ENCODE measurements at regions of chr4 and their contacts with region 1.

Region 1: GRCh38 chr4:55345980-55346850 is at the start of gene SRD5A3:
- DNase-seq: peak; percentile 94
- ATAC-seq: peak; percentile 98
- total RNA-seq, gene SRD5A3: 8.7 TPM

Region 2: DNA sequence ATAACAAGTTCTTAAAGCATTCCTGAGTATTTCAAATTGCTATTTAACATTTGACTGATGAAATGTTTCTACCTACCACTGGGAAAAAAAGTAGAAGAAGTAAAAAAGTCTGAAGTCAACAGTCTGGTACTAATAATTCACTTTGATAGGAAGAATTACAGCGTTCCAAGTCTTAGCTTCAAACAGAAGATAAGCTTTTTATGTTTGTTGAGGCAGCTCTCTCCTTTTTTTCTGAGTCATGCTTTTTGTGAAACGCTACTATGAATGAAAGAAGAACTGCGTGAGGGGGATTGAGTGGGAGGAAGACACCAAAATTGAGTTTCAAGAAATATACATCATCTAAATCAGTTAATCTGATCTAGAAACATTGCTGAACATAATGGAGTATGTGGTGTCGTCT is 207.8 kb before region 1 on chr4:
- intact Hi-C with region 1: no loop called
- DNase-seq: no peak
- ATAC-seq: no peak

Region 3: DNA sequence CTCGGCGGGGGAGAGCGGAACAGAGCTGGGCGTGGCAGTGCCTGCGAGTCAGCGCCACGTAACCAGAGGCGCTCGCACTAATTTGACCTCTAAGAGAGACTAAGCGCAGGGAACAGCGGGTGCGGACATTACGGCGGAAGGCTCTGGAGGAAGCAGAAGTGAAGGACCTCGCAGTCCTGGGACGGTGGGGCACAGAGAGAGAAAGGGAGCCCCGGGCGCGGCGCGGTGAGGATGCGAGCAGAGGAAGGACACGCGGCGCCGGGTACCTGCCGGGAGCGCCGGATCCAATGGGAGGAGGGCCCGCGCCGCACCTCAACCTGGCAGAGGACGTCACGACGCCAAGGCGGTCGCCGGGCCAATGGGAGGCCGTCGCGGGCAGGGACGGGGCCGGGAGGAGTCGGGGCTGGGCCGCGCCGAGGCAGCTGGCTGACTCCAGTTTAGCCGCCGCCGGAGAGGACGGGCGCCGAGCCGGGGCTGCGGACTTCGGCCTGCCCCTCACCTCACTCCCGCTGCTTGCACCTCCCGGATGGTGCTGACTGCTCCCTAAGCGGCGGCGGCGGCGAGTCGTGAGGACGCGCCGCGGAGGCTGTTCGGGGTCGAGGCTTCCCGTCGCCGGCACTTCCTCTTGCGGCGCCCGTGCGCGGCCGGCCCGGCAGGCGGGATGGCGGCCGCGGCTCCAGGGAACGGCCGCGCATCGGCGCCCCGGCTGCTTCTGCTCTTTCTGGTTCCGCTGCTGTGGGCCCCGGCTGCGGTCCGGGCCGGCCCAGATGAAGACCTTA is 49.5 kb after region 1 on chr4 and contains the start of gene TMEM165:
- intact Hi-C with region 1: loop called (anchors 10 kb)
- DNase-seq: peak; percentile 95
- ATAC-seq: peak; percentile 99
- total RNA-seq, gene TMEM165: 35.9 TPM

Region 4: DNA sequence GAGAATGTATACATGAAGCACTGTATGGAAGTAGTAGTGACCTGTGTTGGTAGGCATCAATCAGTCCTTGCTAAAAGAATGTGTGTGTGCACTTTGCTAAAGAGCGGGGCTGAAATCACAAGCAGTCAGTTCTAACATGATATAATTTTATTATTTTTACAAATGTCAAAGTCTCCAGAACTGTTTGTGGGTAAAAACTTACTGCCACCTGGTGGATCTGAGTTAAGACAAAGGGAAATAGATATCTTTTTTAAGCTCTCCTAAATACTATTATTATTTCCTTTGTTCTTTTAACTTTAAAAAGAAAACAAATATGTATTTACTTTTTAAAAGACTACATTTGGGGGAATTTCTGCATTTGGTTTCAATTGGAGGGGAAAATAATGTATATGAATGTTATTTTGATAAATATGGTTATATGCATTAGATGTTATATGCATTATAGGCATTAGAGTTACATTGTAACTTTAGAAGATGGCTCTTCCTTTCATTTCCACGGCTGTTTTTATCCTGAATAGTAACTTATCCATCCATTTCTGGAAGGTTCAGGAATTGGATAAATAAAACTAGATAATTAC is 208.3 kb after region 1 on chr4:
- intact Hi-C with region 1: loop called (anchors 10 kb)
- DNase-seq: no peak
- ATAC-seq: peak; percentile 36

Measured in left ventricle myocardium superior (tissue), 1 donor.